Activated CD8-positive, alpha-beta T cell treated with anti-CD3 and anti-CD28 coated beads for 36 hours (primary cell): ENCODE measurements at regions of chr1 and their contacts with region 1.

Region 1: GRCh38 chr1:82775402-82776000 is 974.8 kb downstream of the ADGRL2 start:
- DNase-seq: peak; percentile 58
- ATAC-seq: no peak
- H3K4me3 Mint-ChIP-seq: no peak overlapping the region
- H3K27ac Mint-ChIP-seq: no peak overlapping the region
- H3K4me1 Mint-ChIP-seq: no peaks in the 10 kb centered on the region
- H3K27me3 Mint-ChIP-seq: no peaks in the 10 kb centered on the region
- CTCF ChIP-seq: peak; percentile 60

Region 2: DNA sequence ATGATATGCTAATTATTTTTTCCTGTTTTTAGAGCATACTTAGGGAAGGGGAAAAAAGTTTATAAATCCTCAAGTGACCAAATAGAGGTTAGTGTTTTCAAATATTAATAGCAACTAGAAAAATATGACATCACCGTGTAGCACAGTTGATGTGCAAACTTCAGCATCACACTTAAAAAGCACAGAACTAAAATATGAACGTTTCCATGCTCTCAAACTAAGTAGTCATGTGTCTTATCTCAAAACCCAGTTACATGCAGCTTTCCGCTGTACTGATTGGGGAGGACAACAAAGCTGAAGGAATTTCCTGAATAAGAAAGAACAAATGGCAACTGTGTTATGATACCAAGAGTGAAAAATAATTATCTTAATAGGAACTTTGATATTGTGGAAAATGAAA is 71.1 kb before region 1 on chr1:
- CTCF ChIA-PET with region 1: no interaction called
- POLR2A ChIA-PET with region 1: no interaction called
- intact Hi-C with region 1: no loop called
- DNase-seq: no peak
- ATAC-seq: no peak
- H3K4me3 Mint-ChIP-seq: no peak overlapping the region
- H3K27ac Mint-ChIP-seq: no peak overlapping the region
- H3K4me1 Mint-ChIP-seq: no peaks in the 10 kb centered on the region
- H3K27me3 Mint-ChIP-seq: no peaks in the 10 kb centered on the region
- CTCF ChIP-seq: no peak

Region 3: DNA sequence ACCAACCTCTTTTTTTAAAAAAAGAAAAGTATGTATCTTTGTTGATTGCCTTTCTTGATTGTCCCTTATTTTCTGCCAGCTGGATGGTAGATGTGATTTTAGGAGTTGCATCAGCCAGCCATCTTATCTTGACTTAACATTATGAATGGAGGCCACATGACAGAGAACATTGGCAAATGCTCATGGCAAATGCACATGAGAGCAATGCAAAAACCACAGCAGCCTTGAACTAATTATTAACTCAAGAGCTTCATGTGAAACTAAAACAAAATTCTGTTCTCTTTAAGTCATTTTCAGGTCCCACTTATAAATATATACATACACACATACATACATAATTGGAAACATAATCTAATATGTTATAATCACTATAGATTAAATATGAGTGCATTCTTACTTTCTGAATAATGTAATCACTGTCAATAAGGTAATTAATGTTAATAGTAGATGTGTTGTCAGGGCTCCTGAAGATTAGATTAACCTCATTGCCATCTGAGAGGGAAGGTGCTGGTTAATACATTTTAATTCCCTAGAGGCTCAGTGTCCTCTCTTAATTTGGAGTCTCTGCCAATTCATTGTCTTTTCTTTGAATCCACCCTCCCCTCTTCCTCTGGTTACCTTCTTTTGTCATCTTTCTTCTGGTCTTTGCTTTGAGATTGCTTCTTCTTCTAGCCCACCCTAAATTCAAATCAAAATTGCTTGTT is 12.5 kb before region 1 on chr1:
- CTCF ChIA-PET with region 1: interaction called, 10 read pairs
- POLR2A ChIA-PET with region 1: no interaction called
- intact Hi-C with region 1: no loop called
- DNase-seq: no peak
- ATAC-seq: no peak
- H3K4me3 Mint-ChIP-seq: no peak overlapping the region
- H3K27ac Mint-ChIP-seq: no peak overlapping the region
- H3K4me1 Mint-ChIP-seq: no peaks in the 10 kb centered on the region
- H3K27me3 Mint-ChIP-seq: peaks cover 2% of the 10 kb centered on the region
- CTCF ChIP-seq: no peak